ENCODE measurements at regions of chr20 and their contacts with region 1.

Region 1: GRCh38 chr20:4082406-4083097 is 67.2 kb upstream of the RNF24 start:
- DNase-seq: peak; percentile 70
- H3K4me3 Mint-ChIP-seq: peak overlapping the region; percentile 26
- H3K27ac Mint-ChIP-seq: peak overlapping the region; percentile 90
- H3K4me1 Mint-ChIP-seq: peaks cover 46% of the 10 kb centered on the region
- H3K27me3 Mint-ChIP-seq: no peaks in the 10 kb centered on the region

Region 2: GRCh38 chr20:3811467-3812258 is 270.9 kb before region 1 on chr20:
- intact Hi-C with region 1: loop called (anchors 10 kb)
- DNase-seq: peak; percentile 81
- H3K4me3 Mint-ChIP-seq: peak overlapping the region; percentile 74
- H3K27ac Mint-ChIP-seq: peak overlapping the region; percentile 99
- H3K4me1 Mint-ChIP-seq: peaks cover 58% of the 10 kb centered on the region
- H3K27me3 Mint-ChIP-seq: no peaks in the 10 kb centered on the region

Region 3: DNA sequence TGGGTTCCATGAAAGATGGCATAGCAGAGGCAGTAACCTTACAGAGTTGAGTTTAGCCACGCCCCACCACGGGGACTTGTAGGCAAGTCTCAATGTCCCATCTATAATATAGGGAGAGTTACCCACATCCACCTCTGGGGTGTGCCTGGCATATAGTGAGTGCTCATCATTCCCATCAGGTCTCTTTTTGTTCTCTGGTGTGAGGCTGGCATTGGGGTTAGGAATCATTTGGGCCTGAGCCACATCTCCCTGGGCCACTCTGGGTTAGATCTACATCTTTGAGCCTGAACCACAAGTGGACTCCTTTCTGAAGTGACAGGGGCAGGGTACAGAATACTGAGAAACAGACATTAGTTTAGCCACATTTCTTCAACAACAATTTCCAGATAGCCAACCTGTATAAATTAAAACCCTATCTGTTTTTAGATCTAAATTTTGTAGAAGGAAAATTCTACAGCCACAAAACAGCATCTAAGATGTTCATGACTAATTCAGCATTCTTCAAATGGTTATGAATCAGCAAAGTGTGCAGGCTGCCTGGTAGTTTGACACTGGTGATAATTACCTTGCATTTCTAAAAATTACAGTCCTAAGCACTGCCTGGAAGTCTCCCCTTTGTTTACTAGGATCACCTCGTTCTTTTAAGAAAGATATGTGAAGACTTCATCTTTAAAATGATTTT is 87.3 kb before region 1 on chr20:
- intact Hi-C with region 1: loop called (anchors 2 kb)
- DNase-seq: no peak
- H3K4me3 Mint-ChIP-seq: no peak overlapping the region
- H3K27ac Mint-ChIP-seq: peak overlapping the region; percentile 83
- H3K4me1 Mint-ChIP-seq: peaks cover 58% of the 10 kb centered on the region
- H3K27me3 Mint-ChIP-seq: no peaks in the 10 kb centered on the region

Region 4: GRCh38 chr20:4038047-4038459 is 44.5 kb before region 1 on chr20:
- intact Hi-C with region 1: loop called (anchors 1 kb)
- DNase-seq: peak; percentile 88
- H3K4me3 Mint-ChIP-seq: peak overlapping the region; percentile 82
- H3K27ac Mint-ChIP-seq: peak overlapping the region; percentile 99
- H3K4me1 Mint-ChIP-seq: peaks cover 33% of the 10 kb centered on the region
- H3K27me3 Mint-ChIP-seq: no peaks in the 10 kb centered on the region

Region 5: DNA sequence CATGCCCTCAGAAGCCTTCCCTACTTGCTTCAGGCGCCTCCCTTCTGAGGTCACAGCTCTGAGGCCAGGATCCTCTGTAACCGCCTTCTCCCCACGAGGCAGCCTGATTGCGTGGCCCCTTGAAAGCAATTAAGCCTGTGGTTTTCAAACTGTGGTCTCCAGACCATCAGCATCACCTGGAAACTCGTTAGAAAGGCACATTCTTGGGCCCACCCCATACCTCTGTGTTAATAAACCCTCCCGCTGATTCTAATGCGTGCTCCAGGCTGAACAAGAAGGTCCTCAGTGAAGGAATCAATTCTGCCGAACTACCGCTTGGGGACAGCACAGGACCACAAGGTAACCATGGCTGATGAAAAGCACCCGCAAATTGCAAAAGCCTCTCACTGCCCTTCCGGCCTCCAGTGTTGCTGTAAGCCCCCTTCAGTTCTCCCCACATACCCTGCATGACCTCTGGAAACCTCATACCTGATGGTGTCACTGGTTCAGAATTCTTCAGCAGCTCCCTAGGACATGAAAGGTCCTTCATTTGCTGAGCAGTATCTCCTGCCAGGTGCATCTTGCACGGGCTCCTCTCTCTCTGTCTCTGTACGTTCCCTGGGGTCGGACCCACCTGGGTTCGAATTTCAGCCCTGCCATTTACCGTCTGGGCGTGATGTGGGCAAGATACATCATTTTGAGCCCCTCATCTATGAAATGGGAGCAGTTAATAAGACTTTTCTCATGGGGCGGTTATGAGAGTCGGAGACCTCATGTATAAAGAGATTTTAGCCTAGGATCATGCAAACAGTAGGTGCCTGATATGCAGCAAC is 26.1 kb after region 1 on chr20:
- intact Hi-C with region 1: no loop called
- DNase-seq: peak; percentile 66
- H3K4me3 Mint-ChIP-seq: no peak overlapping the region
- H3K27ac Mint-ChIP-seq: no peak overlapping the region
- H3K4me1 Mint-ChIP-seq: peaks cover 29% of the 10 kb centered on the region
- H3K27me3 Mint-ChIP-seq: no peaks in the 10 kb centered on the region

Region 6: DNA sequence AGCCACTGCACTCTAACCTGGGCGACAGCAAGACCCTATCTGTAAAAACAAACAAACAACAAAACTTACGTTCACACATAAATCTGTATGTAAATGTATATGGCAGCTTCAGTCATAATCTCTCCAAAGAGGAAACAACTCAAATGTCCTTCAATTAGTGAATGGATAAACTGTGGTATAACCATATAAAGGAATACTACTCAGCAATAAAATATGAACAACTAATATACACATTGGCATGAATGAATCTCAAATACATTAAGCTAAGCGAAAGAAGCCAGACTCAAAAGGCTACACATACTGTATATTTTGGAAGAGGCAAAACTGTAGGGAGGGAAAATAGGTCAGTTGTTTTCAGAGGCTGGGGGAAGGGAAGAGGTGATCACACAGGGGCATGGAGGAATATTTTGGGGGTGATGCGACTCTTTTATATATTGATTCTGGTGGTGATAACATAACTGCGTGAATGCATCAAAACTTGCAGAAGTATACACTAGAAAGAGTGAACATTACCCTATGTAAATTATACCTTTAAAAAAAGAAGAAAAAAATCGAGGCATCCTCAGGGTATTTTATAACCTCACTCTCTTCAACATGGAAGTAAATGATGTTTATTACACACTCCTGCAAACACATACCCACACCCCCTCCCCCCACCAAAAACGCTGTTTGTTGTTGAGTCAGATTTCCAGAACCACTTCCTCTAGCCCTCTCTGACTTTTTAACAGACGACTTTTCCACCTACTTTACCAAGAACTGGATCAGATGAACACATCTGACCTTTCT is 48.0 kb after region 1 on chr20:
- intact Hi-C with region 1: loop called (anchors 1 kb)
- DNase-seq: peak; percentile 55
- H3K4me3 Mint-ChIP-seq: peak overlapping the region; percentile 42
- H3K27ac Mint-ChIP-seq: peak overlapping the region; percentile 96
- H3K4me1 Mint-ChIP-seq: peaks cover 47% of the 10 kb centered on the region
- H3K27me3 Mint-ChIP-seq: peaks cover 4% of the 10 kb centered on the region

Measured in activated T-helper 2 cell treated with anti-CD3 and anti-CD28 coated beads, Interferon-gamma antibody, Interleukin-2, Interleukin-4, amounts not matched to agents 10 μg/mL and 5 μg/mL and 100 μg/mL, durations not matched to agents 14 hours and 24 hours and 36 hours (primary cell).